Caco-2 (cell line): ENCODE measurements at regions of chr4 and their contacts with region 1.

Region 1: GRCh38 chr4:85474818-85475630 is at the start of gene ARHGAP24:
- DNase-seq: peak; percentile 86 to 89
- H3K4me3 ChIP-seq: peak within 1 kb of the TSS; percentile 45
- H3K4me3 Mint-ChIP-seq: peak within 1 kb of the TSS; percentile 83
- H3K27ac Mint-ChIP-seq: peak within 1 kb of the TSS; percentile 73
- H3K4me1 ChIP-seq: peaks cover 5% of the 10 kb centered on the region; the same call in 1 of the 2 replicates
- H3K4me1 Mint-ChIP-seq: no peaks in the 10 kb centered on the region
- H3K27me3 ChIP-seq: no peaks in the 10 kb centered on the region
- H3K27me3 Mint-ChIP-seq: peaks cover 5% of the 10 kb centered on the region
- CTCF ChIP-seq: no peak
- total RNA-seq, gene ARHGAP24: 2.5 and 2.8 TPM in 2 replicates

Region 2: DNA sequence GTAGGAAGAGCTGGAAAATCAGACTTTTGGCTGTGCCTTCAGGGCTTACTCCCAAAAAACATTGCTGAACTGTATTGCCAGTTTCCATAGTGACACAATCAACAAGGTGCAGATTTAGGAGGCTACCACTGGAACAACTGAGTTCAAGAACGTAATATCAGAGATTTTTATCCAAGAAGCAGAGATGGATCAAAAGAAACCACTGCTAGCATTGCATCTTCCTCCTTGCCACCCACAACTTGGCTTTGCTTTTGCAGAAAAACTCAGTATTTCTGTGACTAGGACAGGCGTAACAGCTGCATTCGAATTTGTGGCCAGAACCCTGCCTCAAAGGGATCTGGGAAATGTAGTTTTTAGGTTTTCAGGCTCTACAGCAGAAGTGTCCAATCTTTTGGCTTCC is 480.7 kb before region 1 on chr4:
- CTCF ChIA-PET with region 1: no interaction called
- POLR2A ChIA-PET with region 1: no interaction called
- intact Hi-C with region 1: no loop called
- DNase-seq: no peak
- H3K4me3 ChIP-seq: no peak overlapping the region
- H3K4me3 Mint-ChIP-seq: no peak overlapping the region
- H3K27ac Mint-ChIP-seq: no peak overlapping the region
- H3K4me1 ChIP-seq: no peaks in the 10 kb centered on the region
- H3K4me1 Mint-ChIP-seq: no peaks in the 10 kb centered on the region
- H3K27me3 ChIP-seq: no peaks in the 10 kb centered on the region
- H3K27me3 Mint-ChIP-seq: peaks cover 9% of the 10 kb centered on the region
- CTCF ChIP-seq: no peak

Region 3: DNA sequence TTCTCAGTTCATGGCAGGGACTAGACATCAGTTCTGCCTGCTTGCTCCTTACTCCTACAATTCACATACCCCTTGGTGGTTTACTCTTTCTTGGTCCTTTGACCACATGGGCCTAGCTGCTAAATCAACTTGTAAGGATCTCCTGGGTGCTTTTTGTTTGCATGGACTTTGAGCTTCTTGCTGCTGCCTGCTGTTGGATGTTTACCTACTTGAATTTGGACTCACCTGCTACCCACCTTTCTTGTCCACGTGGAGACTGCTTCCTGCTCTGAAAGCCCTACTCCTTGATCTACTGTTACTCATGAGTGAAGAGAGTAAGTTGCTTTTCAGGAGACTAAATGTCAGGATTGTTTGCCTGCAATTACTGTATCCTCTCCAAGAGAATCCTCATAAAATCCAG is 15.3 kb before region 1 on chr4:
- CTCF ChIA-PET with region 1: interaction called, 5 read pairs
- POLR2A ChIA-PET with region 1: no interaction called
- intact Hi-C with region 1: loop called (anchors 1 kb)
- DNase-seq: peak; percentile 40 to 52
- H3K4me3 ChIP-seq: no peak overlapping the region
- H3K4me3 Mint-ChIP-seq: peak overlapping the region; percentile 28
- H3K27ac Mint-ChIP-seq: peak overlapping the region; percentile 45
- H3K4me1 ChIP-seq: peaks cover 12% of the 10 kb centered on the region
- H3K4me1 Mint-ChIP-seq: peaks cover 13% of the 10 kb centered on the region
- H3K27me3 ChIP-seq: no peaks in the 10 kb centered on the region
- H3K27me3 Mint-ChIP-seq: no peaks in the 10 kb centered on the region
- CTCF ChIP-seq: no peak

Region 4: GRCh38 chr4:85509882-85510631 is 35.0 kb after region 1 on chr4:
- CTCF ChIA-PET with region 1: no interaction called
- POLR2A ChIA-PET with region 1: no interaction called
- intact Hi-C with region 1: loop called (anchors 2 kb)
- DNase-seq: no peak
- H3K4me3 ChIP-seq: no peak overlapping the region
- H3K4me3 Mint-ChIP-seq: no peak overlapping the region
- H3K27ac Mint-ChIP-seq: no peak overlapping the region
- H3K4me1 ChIP-seq: peaks cover 8% of the 10 kb centered on the region; the same call in 1 of the 2 replicates
- H3K4me1 Mint-ChIP-seq: peaks cover 8% of the 10 kb centered on the region
- H3K27me3 ChIP-seq: no peaks in the 10 kb centered on the region
- H3K27me3 Mint-ChIP-seq: no peaks in the 10 kb centered on the region
- CTCF ChIP-seq: no peak

Region 5: GRCh38 chr4:85938062-85938461 is 463.0 kb after region 1 on chr4:
- CTCF ChIA-PET with region 1: no interaction called
- POLR2A ChIA-PET with region 1: no interaction called
- intact Hi-C with region 1: no loop called
- DNase-seq: no peak
- H3K4me3 ChIP-seq: no peak overlapping the region
- H3K4me3 Mint-ChIP-seq: no peak overlapping the region
- H3K27ac Mint-ChIP-seq: no peak overlapping the region
- H3K4me1 ChIP-seq: no peaks in the 10 kb centered on the region
- H3K4me1 Mint-ChIP-seq: peaks cover 25% of the 10 kb centered on the region
- H3K27me3 ChIP-seq: no peaks in the 10 kb centered on the region
- H3K27me3 Mint-ChIP-seq: no peaks in the 10 kb centered on the region
- CTCF ChIP-seq: no peak